ENCODE measurements at regions of chr1 and their contacts with region 1.

Region 1: GRCh38 chr1:12415038-12415466 is 185.2 kb downstream of the VPS13D start:
- DNase-seq: no peak
- ATAC-seq: peak; percentile 70
- H3K4me3 Mint-ChIP-seq: no peak overlapping the region
- H3K27ac Mint-ChIP-seq: peak overlapping the region; percentile 29
- H3K4me1 Mint-ChIP-seq: peaks cover 36% of the 10 kb centered on the region
- H3K27me3 Mint-ChIP-seq: no peaks in the 10 kb centered on the region

Region 2: DNA sequence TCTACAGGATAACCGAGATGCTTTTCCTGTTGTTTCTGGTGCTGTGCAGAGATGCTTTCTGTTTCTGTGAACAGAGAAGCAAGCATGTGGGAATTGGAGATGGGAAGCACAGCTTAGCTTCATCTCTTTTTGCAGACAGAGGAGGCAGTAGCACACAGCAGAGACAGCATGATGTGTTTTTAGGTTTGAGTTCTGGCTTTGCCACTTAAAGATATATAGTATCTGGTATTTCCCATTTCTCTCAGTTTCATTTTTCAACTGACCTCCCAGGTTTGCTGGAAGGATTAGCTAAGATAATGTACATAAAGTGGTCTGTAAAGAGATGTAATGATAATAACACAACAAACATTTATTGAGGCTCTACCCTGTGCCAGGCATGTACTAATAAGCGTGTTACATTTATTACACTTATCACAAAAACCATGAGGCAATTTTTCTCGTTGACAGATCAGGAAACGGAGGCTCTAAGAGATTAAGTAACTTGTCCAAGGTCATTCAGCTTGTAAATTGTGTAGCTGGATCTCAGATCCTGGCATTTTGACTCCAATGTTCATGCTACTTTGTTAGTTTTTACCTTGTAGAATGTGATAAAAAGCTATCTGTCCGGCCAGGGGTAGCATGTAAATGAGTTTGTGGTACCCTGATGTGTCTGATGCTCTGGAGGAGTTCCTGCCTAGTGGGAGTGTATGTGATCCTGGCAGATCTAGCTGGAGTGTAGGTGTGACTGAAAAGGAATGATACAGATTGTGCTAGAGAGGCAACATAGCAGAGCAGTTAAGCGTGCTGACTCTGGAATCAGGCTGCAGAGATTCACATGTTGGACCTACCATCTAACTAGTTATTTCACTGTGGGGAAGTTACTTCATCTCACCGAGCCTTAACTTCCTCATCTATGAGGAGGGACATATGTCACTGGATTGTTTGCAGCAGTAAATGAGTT is 38.7 kb before region 1 on chr1:
- CTCF ChIA-PET with region 1: no interaction called
- POLR2A ChIA-PET with region 1: no interaction called
- intact Hi-C with region 1: no loop called
- DNase-seq: no peak
- ATAC-seq: no peak
- H3K4me3 Mint-ChIP-seq: no peak overlapping the region
- H3K27ac Mint-ChIP-seq: no peak overlapping the region
- H3K4me1 Mint-ChIP-seq: peaks cover 6% of the 10 kb centered on the region
- H3K27me3 Mint-ChIP-seq: no peaks in the 10 kb centered on the region

Region 3: DNA sequence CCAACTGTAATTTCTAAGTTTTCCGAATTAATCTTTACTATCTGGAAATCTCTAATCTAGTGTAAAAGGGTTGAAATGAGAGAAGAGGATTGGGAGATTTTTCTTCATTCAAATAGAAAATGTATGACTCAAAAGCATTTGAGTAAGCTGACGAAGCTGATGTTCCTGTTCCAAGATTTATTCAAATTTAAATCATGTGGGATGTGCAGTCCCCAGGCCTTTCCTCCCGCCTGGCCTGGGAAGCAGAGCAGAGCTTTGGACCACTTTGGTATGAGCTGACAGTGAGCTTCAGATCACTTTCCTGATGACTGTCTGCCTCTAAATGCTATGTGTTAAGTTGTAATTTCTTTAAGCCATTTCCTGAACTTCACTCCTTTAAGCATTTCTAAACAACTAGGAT is 11.0 kb after region 1 on chr1:
- CTCF ChIA-PET with region 1: interaction called, 14 read pairs
- POLR2A ChIA-PET with region 1: no interaction called
- intact Hi-C with region 1: no loop called
- DNase-seq: no peak
- ATAC-seq: no peak
- H3K4me3 Mint-ChIP-seq: no peak overlapping the region
- H3K27ac Mint-ChIP-seq: no peak overlapping the region
- H3K4me1 Mint-ChIP-seq: peaks cover 9% of the 10 kb centered on the region
- H3K27me3 Mint-ChIP-seq: no peaks in the 10 kb centered on the region